ENCODE measurements at regions of chr19 and their contacts with region 1.

Region 1: GRCh38 chr19:41859618-41860418 is at the start of gene RPS19:
- DNase-seq: peak; percentile 97 to 98
- ATAC-seq: peak; percentile 96
- H3K4me3 ChIP-seq: peak within 1 kb of the TSS; percentile 70 to 94 (median 92)
- H3K27ac ChIP-seq: peak within 1 kb of the TSS; percentile 86 to 100 (median 98)
- H3K4me1 ChIP-seq: peaks cover 26 to 37% of the 10 kb centered on the region in 2 donors
- H3K27me3 ChIP-seq: no peaks in the 10 kb centered on the region
- CTCF ChIP-seq: peak; percentile 48 to 75 (median 64)
- POLR2A ChIP-seq: peak; percentile 92 to 93
- total RNA-seq, gene RPS19: 180 to 636 (median 401) TPM

Region 2: GRCh38 chr19:41883821-41884733 is 24.3 kb after region 1 on chr19:
- in situ Hi-C with region 1: no loop called
- intact Hi-C with region 1: loop called (anchors 1 kb)
- DNase-seq: peak; percentile 90 to 93
- ATAC-seq: peak; percentile 95
- H3K4me3 ChIP-seq: peak overlapping the region; percentile 79 to 89 (median 84)
- H3K27ac ChIP-seq: peak overlapping the region; percentile 70 to 77 (median 74)
- H3K4me1 ChIP-seq: peaks cover 16 to 18% of the 10 kb centered on the region in 2 donors
- H3K27me3 ChIP-seq: no peaks in the 10 kb centered on the region
- CTCF ChIP-seq: peak in 2 of 5 experiments; percentile 36
- POLR2A ChIP-seq: peak; percentile 51 to 67

Region 3: DNA sequence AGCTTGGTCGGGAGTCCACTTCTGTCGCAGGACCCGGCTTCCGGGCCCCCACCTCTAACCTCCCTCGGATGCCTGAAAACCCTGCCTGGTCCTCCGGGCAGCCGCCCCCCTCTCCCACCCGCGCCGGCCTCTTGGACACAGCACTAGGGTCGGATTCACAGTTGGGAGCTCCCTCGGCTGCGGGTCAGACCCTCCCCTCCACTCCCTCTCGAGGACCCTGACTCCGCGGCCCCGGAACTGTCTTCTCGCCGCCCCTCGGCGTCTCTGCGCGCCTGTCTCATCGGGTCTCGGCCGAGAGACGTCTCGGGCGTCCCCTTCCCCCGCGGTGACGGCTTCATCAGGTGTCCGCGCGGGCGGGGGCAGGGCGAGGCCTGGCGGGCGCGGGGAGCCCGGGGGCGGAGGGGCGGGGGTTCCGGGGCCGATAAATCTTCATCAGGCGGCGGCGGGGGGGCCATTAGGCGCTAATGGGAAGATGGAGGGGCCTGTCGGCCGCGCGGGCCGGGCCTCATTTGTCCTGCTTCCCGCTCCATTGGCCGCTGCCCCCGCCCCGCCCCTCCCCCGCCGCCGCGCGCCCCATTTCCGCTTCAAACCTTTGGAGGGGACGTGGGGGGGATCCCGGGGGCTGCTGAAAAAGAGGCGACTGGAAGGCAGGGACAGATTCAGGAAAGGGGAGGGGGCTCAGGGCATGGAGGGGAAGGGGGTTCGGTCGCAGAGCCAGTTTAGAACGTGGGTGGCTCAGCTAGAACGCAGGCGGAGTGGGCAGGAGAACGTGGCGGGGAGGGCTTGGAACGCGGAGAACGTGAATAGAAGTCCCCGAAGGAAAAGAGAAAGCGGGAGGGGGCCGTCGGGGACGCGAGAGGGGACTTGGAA is 80.3 kb after region 1 on chr19:
- in situ Hi-C with region 1: loop called in 1 of 4 experiments (anchors 5 kb)
- intact Hi-C with region 1: no loop called
- DNase-seq: no peak
- ATAC-seq: no peak
- H3K4me3 ChIP-seq: peak overlapping the region; percentile 25 to 50 (median 38)
- H3K27ac ChIP-seq: no peak overlapping the region
- H3K4me1 ChIP-seq: peaks cover 0 to 8% of the 10 kb centered on the region in 2 donors
- H3K27me3 ChIP-seq: peaks cover 41 to 42% (median 41%) of the 10 kb centered on the region in 3 donors
- CTCF ChIP-seq: no peak
- POLR2A ChIP-seq: no peak

Region 4: GRCh38 chr19:41959056-41960053 is 99.5 kb after region 1 on chr19 and contains the start of gene RABAC1:
- in situ Hi-C with region 1: loop called in 2 of 4 experiments (anchors 10 kb)
- intact Hi-C with region 1: loop called (anchors 1 kb)
- DNase-seq: peak; percentile 81 to 83
- ATAC-seq: peak; percentile 96
- H3K4me3 ChIP-seq: peak within 1 kb of the TSS; percentile 63 to 96 (median 92)
- H3K27ac ChIP-seq: peak within 1 kb of the TSS; percentile 82 to 89 (median 86)
- H3K4me1 ChIP-seq: peaks cover 11 to 15% of the 10 kb centered on the region in 2 donors
- H3K27me3 ChIP-seq: no peaks in the 10 kb centered on the region
- CTCF ChIP-seq: no peak
- POLR2A ChIP-seq: peak in 1 of 2 donors; percentile 32
- total RNA-seq, gene RABAC1: 94.4 to 146 (median 110) TPM

Region 5: GRCh38 chr19:42075616-42076379 is 216.0 kb after region 1 on chr19 and contains the start of gene ZNF574:
- in situ Hi-C with region 1: no loop called
- intact Hi-C with region 1: loop called (anchors 5 kb)
- DNase-seq: peak; percentile 99
- ATAC-seq: peak; percentile 98
- H3K4me3 ChIP-seq: peak within 1 kb of the TSS; percentile 76 to 95 (median 80)
- H3K27ac ChIP-seq: peak within 1 kb of the TSS; percentile 93 to 100 (median 96)
- H3K4me1 ChIP-seq: peaks cover 15 to 18% of the 10 kb centered on the region in 2 donors
- H3K27me3 ChIP-seq: no peaks in the 10 kb centered on the region
- CTCF ChIP-seq: no peak
- POLR2A ChIP-seq: peak; percentile 76 to 91
- total RNA-seq, gene ZNF574: 10.8 to 15.1 (median 13.8) TPM

Region 6: DNA sequence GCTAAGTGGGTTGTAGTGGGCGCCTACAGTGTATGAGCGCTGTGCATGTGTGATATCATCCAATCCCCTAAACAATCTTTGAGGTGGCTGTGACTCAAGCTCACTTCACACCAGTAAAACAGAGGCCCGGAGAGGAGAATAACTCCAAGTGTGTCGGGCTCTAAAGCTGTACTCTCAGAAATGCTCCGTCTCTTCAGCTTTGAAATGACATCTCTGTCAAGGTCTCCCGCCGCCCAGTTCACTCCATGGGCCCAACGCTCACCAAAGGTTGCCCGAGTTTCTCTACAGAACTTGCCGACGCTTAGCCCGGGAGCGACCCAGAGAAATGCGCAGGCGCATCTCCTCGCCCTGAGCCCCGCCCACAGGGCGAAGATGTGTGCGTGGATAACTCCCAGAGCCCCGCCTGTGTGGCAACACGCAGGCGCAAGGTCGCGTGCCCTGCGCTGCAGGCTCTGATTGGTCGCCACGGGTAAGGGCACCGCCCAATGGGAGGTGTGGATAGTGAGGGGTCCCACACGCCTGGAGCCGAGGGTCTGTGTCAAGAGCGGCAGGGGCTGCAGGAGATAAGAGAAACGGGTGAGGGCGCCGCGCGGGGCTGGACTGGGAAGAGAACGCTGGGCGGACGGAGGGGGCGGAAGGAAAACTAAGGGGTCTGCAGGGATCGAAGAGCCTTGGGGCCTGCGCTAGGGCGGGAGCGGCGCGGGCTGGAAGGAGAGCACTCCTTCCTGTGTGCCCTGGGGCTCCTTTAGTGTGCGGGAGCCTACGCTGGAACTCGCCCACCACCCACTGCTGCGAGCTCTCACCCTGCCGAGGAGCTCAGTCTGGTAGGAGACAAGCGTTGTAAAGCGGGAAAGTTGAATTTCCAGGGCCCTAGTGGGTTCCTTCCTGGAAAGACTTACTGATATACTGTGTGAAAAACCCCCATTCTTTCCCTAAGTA is 360.3 kb after region 1 on chr19 and contains the start of gene ZNF526:
- in situ Hi-C with region 1: no loop called
- intact Hi-C with region 1: loop called (anchors 10 kb)
- DNase-seq: peak; percentile 96 to 98
- ATAC-seq: peak; percentile 83 to 84
- H3K4me3 ChIP-seq: peak within 1 kb of the TSS; percentile 71 to 90 (median 88)
- H3K27ac ChIP-seq: peak within 1 kb of the TSS; percentile 86 to 97 (median 94)
- H3K4me1 ChIP-seq: peaks cover 35 to 46% of the 10 kb centered on the region in 2 donors
- H3K27me3 ChIP-seq: no peaks in the 10 kb centered on the region
- CTCF ChIP-seq: no peak
- POLR2A ChIP-seq: peak; percentile 68 to 79
- total RNA-seq, gene ZNF526: 3.3 to 5.8 (median 4.9) TPM

Measured in gastrocnemius medialis (tissue), 4 donors.